HEK293 (cell line): ENCODE measurements at regions of chr7 and their contacts with region 1.

Region 1: GRCh38 chr7:36670585-36671431 is 53.5 kb downstream of the AOAH start:
- H3K4me3 ChIP-seq: no peak overlapping the region
- H3K27ac ChIP-seq: no peak overlapping the region
- H3K4me1 ChIP-seq: no peaks in the 10 kb centered on the region
- CTCF ChIP-seq: 0 out of 2 replicates have a peak, but pooled peaks have one; percentile 32

Region 2: GRCh38 chr7:36615852-36616540 is 54.8 kb before region 1 on chr7:
- CTCF ChIA-PET with region 1: interaction called, 10 read pairs
- POLR2A ChIA-PET with region 1: no interaction called
- H3K4me3 ChIP-seq: no peak overlapping the region
- H3K27ac ChIP-seq: no peak overlapping the region
- H3K4me1 ChIP-seq: no peaks in the 10 kb centered on the region
- CTCF ChIP-seq: no peak

Region 3: GRCh38 chr7:36787933-36788378 is 117.1 kb after region 1 on chr7:
- CTCF ChIA-PET with region 1: no interaction called
- POLR2A ChIA-PET with region 1: no interaction called
- H3K4me3 ChIP-seq: no peak overlapping the region
- H3K27ac ChIP-seq: no peak overlapping the region
- H3K4me1 ChIP-seq: no peaks in the 10 kb centered on the region
- CTCF ChIP-seq: no peak